ENCODE measurements at regions of chr6 and their contacts with region 1.

Region 1: GRCh38 chr6:34236131-34236996 is at the start of gene HMGA1:
- DNase-seq: peak; percentile 92

Region 2: GRCh38 chr6:34223956-34224940 is 12.1 kb before region 1 on chr6:
- CTCF ChIA-PET with region 1: no interaction called
- POLR2A ChIA-PET with region 1: interaction called, 21 read pairs
- DNase-seq: peak; percentile 95

Region 3: DNA sequence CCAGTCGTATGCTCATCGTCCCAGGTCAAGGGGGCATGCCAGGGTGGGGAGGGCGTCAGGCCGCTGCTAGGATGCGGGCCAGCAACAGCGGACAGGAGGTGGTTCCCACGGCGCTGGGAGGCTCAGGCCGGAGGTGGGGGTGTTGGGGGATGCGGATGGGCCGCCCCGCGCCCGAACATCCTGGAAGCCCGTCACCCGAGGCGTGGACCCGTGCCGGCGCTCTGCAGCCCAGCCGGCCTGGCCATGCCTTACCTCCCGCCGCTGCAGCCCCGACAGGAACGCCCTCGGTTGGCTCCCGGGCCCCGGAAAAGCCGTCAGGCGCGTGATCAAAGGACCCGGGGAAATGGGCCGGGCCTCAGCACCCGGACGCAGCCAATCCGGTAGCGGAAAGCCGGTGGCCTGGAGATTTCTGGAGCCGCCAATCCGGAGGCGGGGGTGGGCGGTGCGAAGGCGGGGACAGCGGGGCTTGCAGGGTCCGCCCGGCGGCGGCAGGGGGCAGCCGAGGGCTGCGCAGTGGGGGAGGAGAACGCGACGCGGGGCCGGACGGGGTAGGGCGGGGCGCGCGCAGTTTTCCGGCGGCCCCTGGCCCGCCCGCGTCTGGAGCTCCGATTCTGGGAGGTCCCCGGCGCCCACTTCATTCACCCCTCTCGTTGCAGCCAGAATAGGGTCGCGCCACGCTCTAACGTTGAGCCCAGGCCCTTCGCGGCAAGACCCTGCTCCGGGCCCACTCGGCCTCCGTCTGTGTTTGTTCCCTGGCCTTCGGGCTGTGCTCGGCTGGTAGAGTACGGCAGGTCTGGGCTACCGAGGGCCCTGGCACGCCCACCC is 12.6 kb after region 1 on chr6 and contains the start of gene SMIM29:
- CTCF ChIA-PET with region 1: interaction called, 3 read pairs
- POLR2A ChIA-PET with region 1: interaction called, 13 read pairs
- DNase-seq: peak; percentile 95

Region 4: GRCh38 chr6:34301408-34301807 is 65.0 kb after region 1 on chr6:
- CTCF ChIA-PET with region 1: no interaction called
- POLR2A ChIA-PET with region 1: no interaction called
- DNase-seq: no peak